Panc1 (cell line): ENCODE measurements at regions of chr2 and their contacts with region 1.

Region 1: GRCh38 chr2:151730262-151730975 is 3.9 kb downstream of the NEB start:
- DNase-seq: no peak
- ATAC-seq: no peak
- H3K4me3 ChIP-seq: no peak overlapping the region
- H3K27ac ChIP-seq: no peak overlapping the region
- H3K4me1 ChIP-seq: no peaks in the 10 kb centered on the region
- H3K27me3 ChIP-seq: peaks cover 4% of the 10 kb centered on the region; the same call in 1 of the 2 replicates
- CTCF ChIP-seq: no peak

Region 2: GRCh38 chr2:151459358-151459757 is 271.1 kb before region 1 on chr2:
- CTCF ChIA-PET with region 1: no interaction called
- POLR2A ChIA-PET with region 1: no interaction called
- in situ Hi-C with region 1: no loop called
- intact Hi-C with region 1: no loop called
- DNase-seq: no peak
- ATAC-seq: no peak
- H3K4me3 ChIP-seq: no peak overlapping the region
- H3K27ac ChIP-seq: no peak overlapping the region
- H3K4me1 ChIP-seq: no peaks in the 10 kb centered on the region
- H3K27me3 ChIP-seq: no peaks in the 10 kb centered on the region
- CTCF ChIP-seq: no peak

Region 3: DNA sequence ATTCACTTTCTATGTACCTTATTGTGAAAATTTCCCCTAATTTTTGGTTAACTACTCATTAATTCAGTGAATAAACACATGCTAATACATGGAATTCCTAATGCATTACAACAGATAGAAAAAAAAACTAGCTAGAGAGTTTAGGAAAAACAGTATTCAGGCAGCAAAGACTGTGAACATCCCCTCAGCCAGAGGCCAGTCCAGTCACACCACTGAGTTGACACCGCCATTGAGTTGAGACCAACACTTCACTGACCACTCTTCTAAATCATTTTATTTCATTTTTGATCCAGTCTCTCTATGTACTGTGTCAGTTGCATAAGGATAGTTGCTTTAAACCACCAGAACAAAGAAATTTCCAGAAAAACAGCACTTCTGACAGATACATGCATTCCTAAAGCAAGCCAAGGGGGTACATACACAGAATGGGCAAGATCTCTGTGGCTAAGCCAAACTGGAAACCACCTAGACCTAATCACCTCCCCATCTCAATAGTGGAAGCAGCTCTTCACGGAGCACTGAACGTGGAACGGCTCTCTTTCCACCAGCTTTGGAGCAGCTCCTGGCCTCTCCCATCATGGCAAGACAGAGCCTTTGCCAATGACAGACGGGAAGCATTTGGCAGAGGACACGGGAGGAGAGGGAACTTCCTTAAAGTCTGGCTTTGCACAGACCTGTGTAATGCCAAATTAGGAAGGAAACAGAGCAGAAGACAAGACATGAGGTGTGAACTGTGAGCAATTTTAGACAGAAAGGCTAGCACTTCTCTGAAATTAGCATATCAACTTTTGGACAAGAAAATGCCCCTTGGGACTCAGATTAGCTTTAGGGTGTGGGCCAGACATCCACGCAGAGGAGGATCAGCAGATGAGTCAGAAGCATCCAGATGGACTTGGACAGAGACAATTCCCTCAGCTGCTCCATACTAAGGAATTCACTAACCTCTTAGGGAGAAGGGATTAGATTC is 332.0 kb after region 1 on chr2:
- CTCF ChIA-PET with region 1: no interaction called
- POLR2A ChIA-PET with region 1: interaction called, 25 read pairs
- in situ Hi-C with region 1: no loop called
- intact Hi-C with region 1: no loop called
- DNase-seq: no peak
- ATAC-seq: no peak
- H3K4me3 ChIP-seq: no peak overlapping the region
- H3K27ac ChIP-seq: no peak overlapping the region
- H3K4me1 ChIP-seq: no peaks in the 10 kb centered on the region
- H3K27me3 ChIP-seq: peaks cover 6% of the 10 kb centered on the region
- CTCF ChIP-seq: no peak